AG04449 (cell line): ENCODE measurements at regions of chr1 and their contacts with region 1.

Region 1: GRCh38 chr1:50620680-50621329 is 197.6 kb upstream of the DMRTA2 start:
- DNase-seq: no peak
- H3K4me3 ChIP-seq: no peak overlapping the region
- CTCF ChIP-seq: peak; percentile 32

Region 2: GRCh38 chr1:50605186-50605875 is 15.5 kb before region 1 on chr1:
- CTCF ChIA-PET with region 1: interaction called, 26 read pairs
- POLR2A ChIA-PET with region 1: no interaction called
- DNase-seq: no peak
- H3K4me3 ChIP-seq: no peak overlapping the region
- CTCF ChIP-seq: peak; percentile 40

Region 3: GRCh38 chr1:50633465-50633864 is 12.7 kb after region 1 on chr1:
- CTCF ChIA-PET with region 1: interaction called, 10 read pairs
- POLR2A ChIA-PET with region 1: no interaction called
- DNase-seq: no peak
- H3K4me3 ChIP-seq: no peak overlapping the region
- CTCF ChIP-seq: no peak

Region 4: GRCh38 chr1:50697440-50698421 is 76.9 kb after region 1 on chr1:
- CTCF ChIA-PET with region 1: interaction called, 38 read pairs
- POLR2A ChIA-PET with region 1: no interaction called
- DNase-seq: peak; percentile 24
- H3K4me3 ChIP-seq: no peak overlapping the region
- CTCF ChIP-seq: no peak

Region 5: GRCh38 chr1:50704126-50704525 is 83.3 kb after region 1 on chr1:
- CTCF ChIA-PET with region 1: interaction called, 38 read pairs
- POLR2A ChIA-PET with region 1: no interaction called
- DNase-seq: no peak
- H3K4me3 ChIP-seq: no peak overlapping the region
- CTCF ChIP-seq: peak; percentile 65

Region 6: DNA sequence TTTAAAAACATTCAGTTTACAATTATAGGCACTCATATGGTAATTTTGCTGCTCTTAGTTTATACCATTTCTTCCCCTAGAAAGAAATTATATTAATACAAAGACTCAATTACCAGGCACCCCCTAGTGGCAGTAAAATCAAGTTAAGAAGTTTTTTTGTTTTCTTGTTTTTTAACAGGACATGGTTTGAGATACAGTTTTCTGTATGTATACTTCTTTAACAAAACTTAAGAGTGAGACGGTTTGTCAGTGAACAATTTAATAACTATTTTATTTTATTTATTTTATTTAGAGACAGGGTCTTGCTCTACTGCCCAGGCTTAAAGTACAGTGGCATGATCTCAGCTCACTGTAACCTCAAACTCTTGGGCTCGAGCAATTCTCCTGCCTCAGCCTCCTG is 114.6 kb after region 1 on chr1:
- CTCF ChIA-PET with region 1: interaction called, 10 read pairs
- POLR2A ChIA-PET with region 1: no interaction called
- DNase-seq: no peak
- H3K4me3 ChIP-seq: no peak overlapping the region
- CTCF ChIP-seq: peak; percentile 14